PC-3 (cell line): ENCODE measurements at regions of chr7 and their contacts with region 1.

Region 1: GRCh38 chr7:32204361-32205018 is 134.3 kb upstream of the PDE1C start:
- DNase-seq: peak; percentile 96
- ATAC-seq: peak; percentile 98
- H3K4me3 ChIP-seq: peak overlapping the region; percentile 64
- H3K27ac ChIP-seq: no peak overlapping the region
- H3K4me1 ChIP-seq: peaks cover 8% of the 10 kb centered on the region; the same call in 1 of the 2 replicates
- H3K27me3 ChIP-seq: 0 out of 2 replicates have a peak, but pooled peaks cover 7% of the 10 kb centered on the region
- CTCF ChIP-seq: peak; percentile 93

Region 2: DNA sequence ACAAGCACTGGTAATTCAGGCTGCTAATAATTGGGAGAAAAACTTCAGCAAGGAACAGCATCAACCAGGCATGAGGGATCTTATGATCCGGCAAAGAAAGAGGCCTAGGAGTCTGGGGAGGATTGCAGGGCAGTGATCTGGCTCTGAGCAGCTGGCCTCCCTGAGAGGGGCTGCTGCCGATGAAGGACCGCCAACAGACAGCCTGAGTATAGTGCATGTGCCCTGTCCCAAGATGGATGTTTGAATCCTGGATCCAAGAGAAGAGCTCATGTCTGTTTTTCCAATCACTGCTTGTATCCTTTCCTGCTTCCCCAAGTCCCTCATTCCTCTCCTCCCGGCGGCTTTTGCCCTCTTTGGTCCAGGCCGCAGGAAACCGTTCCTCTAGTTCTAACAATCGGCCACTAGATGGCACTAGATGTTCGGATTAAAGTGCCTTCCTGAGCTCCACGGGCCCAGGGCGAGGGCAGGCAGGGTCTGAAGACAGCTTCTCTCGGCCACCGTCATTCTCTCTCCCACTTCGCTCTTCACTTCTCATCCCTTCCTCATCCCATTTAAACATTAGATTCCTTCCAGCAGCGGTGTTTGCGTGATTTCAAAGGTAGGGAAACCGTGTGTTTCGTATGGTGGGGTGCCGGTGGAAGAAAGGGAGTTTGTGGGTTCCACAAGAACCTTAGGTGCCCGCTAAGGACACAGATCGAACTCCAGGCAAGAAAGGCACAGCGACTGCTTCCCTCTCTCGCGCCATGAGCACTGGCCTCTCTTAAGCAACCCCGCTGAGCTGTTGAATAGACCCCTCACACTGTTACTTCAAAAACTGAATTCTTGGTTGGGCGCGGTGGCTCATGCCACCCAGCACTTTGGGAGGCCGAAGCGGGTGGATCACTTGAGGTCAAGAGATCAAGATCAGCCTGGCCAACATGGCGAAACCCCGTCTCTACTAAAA is 1070.0 kb before region 1 on chr7:
- CTCF ChIA-PET with region 1: no interaction called
- POLR2A ChIA-PET with region 1: no interaction called
- intact Hi-C with region 1: loop called (anchors 5 kb)
- DNase-seq: peak; percentile 86
- ATAC-seq: peak; percentile 99
- H3K4me3 ChIP-seq: no peak overlapping the region
- H3K27ac ChIP-seq: no peak overlapping the region
- H3K4me1 ChIP-seq: no peaks in the 10 kb centered on the region
- H3K27me3 ChIP-seq: peaks cover 30% of the 10 kb centered on the region
- CTCF ChIP-seq: peak; percentile 76

Region 3: DNA sequence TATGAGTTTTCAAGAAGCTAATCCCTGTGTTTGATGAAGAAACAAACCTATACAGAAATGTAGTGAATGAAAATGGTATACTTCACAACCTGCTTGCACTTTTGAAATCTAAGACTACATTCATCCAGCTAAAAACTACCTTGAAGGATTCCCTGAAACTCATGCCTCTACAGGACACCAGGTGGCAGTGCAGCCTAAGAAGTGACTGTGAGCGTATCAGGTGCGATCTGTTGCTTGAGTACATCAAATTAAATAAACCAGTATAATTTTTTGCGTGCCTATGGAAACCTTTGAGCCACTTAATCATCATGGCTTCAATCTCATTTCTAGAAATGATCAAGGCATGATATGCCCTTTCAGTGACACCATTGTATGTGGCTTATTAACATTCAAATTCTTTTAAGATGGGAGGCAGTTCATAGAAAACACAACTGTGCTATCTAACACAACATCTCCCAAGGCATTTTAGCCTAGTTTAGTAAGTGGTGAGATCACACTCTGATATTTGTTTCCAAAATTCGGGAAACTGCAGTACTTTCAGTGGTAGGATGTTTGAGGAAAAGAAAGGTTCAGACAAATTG is 460.1 kb before region 1 on chr7:
- CTCF ChIA-PET with region 1: interaction called, 38 read pairs
- POLR2A ChIA-PET with region 1: no interaction called
- intact Hi-C with region 1: loop called (anchors 1 kb)
- DNase-seq: peak; percentile 85
- ATAC-seq: peak; percentile 73
- H3K4me3 ChIP-seq: no peak overlapping the region
- H3K27ac ChIP-seq: no peak overlapping the region
- H3K4me1 ChIP-seq: peaks cover 25% of the 10 kb centered on the region
- H3K27me3 ChIP-seq: no peaks in the 10 kb centered on the region
- CTCF ChIP-seq: peak; percentile 94

Region 4: GRCh38 chr7:31811650-31812461 is 392.6 kb before region 1 on chr7:
- CTCF ChIA-PET with region 1: interaction called, 7 read pairs
- POLR2A ChIA-PET with region 1: interaction called, 3 read pairs
- intact Hi-C with region 1: loop called (anchors 1 kb)
- DNase-seq: peak; percentile 21
- ATAC-seq: no peak
- H3K4me3 ChIP-seq: no peak overlapping the region
- H3K27ac ChIP-seq: peak overlapping the region; percentile 34
- H3K4me1 ChIP-seq: peaks cover 49% of the 10 kb centered on the region
- H3K27me3 ChIP-seq: no peaks in the 10 kb centered on the region
- CTCF ChIP-seq: no peak

Region 5: GRCh38 chr7:32043714-32044113 is 160.8 kb before region 1 on chr7:
- CTCF ChIA-PET with region 1: no interaction called
- POLR2A ChIA-PET with region 1: no interaction called
- intact Hi-C with region 1: loop called (anchors 1 kb)
- DNase-seq: peak; percentile 83
- ATAC-seq: peak; percentile 72
- H3K4me3 ChIP-seq: peak overlapping the region; percentile 8; the same call in 1 of the 2 replicates
- H3K27ac ChIP-seq: peak overlapping the region; percentile 93
- H3K4me1 ChIP-seq: peaks cover 66% of the 10 kb centered on the region
- H3K27me3 ChIP-seq: no peaks in the 10 kb centered on the region
- CTCF ChIP-seq: no peak

Region 6: GRCh38 chr7:32115831-32116230 is 88.7 kb before region 1 on chr7:
- CTCF ChIA-PET with region 1: no interaction called
- POLR2A ChIA-PET with region 1: no interaction called
- intact Hi-C with region 1: loop called (anchors 5 kb)
- DNase-seq: peak; percentile 81
- ATAC-seq: peak; percentile 90
- H3K4me3 ChIP-seq: no peak overlapping the region
- H3K27ac ChIP-seq: peak overlapping the region; percentile 20; the same call in 1 of the 2 replicates
- H3K4me1 ChIP-seq: peaks cover 17% of the 10 kb centered on the region; the same call in 1 of the 2 replicates
- H3K27me3 ChIP-seq: no peaks in the 10 kb centered on the region
- CTCF ChIP-seq: no peak

Region 7: DNA sequence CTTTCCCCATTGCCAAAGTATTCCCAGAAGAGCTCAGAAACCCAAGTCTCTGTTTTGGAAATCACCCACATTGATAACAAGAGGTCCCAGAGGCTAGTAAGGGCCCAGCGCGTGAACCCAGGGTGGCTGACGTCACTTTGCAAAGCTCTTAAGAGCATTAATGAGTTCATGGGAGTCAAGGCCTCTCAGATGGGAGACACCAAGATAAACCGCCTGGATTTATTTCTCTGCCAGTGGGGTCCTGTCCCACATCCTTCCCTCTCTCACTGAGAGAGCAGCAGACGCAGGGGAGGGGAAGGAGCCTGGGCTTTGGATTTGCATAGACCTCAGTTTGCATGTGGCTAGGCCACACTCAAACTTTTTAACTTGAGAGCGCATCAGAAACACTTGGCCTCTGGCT is 50.5 kb after region 1 on chr7:
- CTCF ChIA-PET with region 1: no interaction called
- POLR2A ChIA-PET with region 1: no interaction called
- intact Hi-C with region 1: no loop called
- DNase-seq: no peak
- ATAC-seq: no peak
- H3K4me3 ChIP-seq: no peak overlapping the region
- H3K27ac ChIP-seq: no peak overlapping the region
- H3K4me1 ChIP-seq: no peaks in the 10 kb centered on the region
- H3K27me3 ChIP-seq: peaks cover 72% of the 10 kb centered on the region
- CTCF ChIP-seq: no peak